ENCODE measurements at regions of chr9 and their contacts with region 1.

Region 1: GRCh38 chr9:25964239-25964638 is 286.0 kb upstream of the TUSC1 start:
- DNase-seq: peak in 1 of 2 experiments; percentile 37
- H3K4me3 ChIP-seq: no peak overlapping the region
- H3K4me3 Mint-ChIP-seq: no peak overlapping the region
- H3K27ac Mint-ChIP-seq: no peak overlapping the region
- H3K4me1 ChIP-seq: no peaks in the 10 kb centered on the region
- H3K4me1 Mint-ChIP-seq: no peaks in the 10 kb centered on the region
- H3K27me3 ChIP-seq: no peaks in the 10 kb centered on the region
- H3K27me3 Mint-ChIP-seq: no peaks in the 10 kb centered on the region
- CTCF ChIP-seq: peak in 1 of 2 experiments; percentile 11

Region 2: DNA sequence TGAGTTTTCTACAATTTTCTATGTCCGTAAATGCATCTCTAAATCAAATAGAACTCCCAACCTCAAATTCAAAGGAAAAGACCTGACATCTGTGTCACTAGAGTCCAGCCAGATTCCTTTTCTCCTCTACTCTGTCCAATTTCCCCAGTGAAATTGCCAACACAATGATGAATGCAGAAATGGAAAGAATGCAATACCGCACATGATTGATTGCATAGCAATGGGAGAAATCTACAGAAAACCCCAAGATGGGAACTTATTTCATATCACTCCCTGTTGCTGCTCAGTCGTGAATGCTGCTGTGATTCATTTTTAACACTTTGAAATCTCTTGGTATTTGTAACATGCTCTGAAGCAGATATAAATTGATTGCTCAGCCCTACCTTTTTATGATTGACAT is 69.1 kb after region 1 on chr9:
- CTCF ChIA-PET with region 1: no interaction called
- POLR2A ChIA-PET with region 1: no interaction called
- intact Hi-C with region 1: no loop called
- DNase-seq: no peak
- H3K4me3 ChIP-seq: no peak overlapping the region
- H3K4me3 Mint-ChIP-seq: no peak overlapping the region
- H3K27ac Mint-ChIP-seq: no peak overlapping the region
- H3K4me1 ChIP-seq: no peaks in the 10 kb centered on the region
- H3K4me1 Mint-ChIP-seq: no peaks in the 10 kb centered on the region
- H3K27me3 ChIP-seq: no peaks in the 10 kb centered on the region
- H3K27me3 Mint-ChIP-seq: no peaks in the 10 kb centered on the region
- CTCF ChIP-seq: no peak

Region 3: GRCh38 chr9:26326473-26327044 is 362.3 kb after region 1 on chr9:
- CTCF ChIA-PET with region 1: no interaction called
- POLR2A ChIA-PET with region 1: no interaction called
- intact Hi-C with region 1: loop called (anchors 1 kb)
- DNase-seq: peak in 1 of 2 experiments; percentile 15
- H3K4me3 ChIP-seq: no peak overlapping the region
- H3K4me3 Mint-ChIP-seq: no peak overlapping the region
- H3K27ac Mint-ChIP-seq: no peak overlapping the region
- H3K4me1 ChIP-seq: no peaks in the 10 kb centered on the region
- H3K4me1 Mint-ChIP-seq: no peaks in the 10 kb centered on the region
- H3K27me3 ChIP-seq: no peaks in the 10 kb centered on the region
- H3K27me3 Mint-ChIP-seq: no peaks in the 10 kb centered on the region
- CTCF ChIP-seq: peak; percentile 26 to 32

Region 4: DNA sequence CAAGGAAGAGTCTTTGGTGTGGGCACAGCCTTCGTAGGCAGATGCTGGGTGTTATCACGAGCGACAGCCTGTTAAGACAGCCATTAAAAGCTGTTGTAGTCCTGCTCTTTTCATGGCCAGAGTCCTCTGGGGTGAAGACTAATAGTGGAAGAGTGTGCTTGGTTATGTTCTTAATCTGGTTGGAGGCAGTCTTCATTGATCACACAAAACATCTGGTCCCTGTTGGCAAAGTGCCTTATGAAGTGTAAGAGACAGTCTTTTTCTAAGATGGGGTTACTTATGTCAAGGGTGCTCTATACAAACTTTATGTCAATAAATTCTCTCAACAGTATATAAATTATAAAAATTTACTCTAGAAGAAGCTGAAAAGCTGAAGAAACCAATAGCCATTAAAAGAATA is 648.0 kb after region 1 on chr9:
- CTCF ChIA-PET with region 1: no interaction called
- POLR2A ChIA-PET with region 1: no interaction called
- intact Hi-C with region 1: loop called (anchors 2 kb)
- DNase-seq: no peak
- H3K4me3 ChIP-seq: no peak overlapping the region
- H3K4me3 Mint-ChIP-seq: no peak overlapping the region
- H3K27ac Mint-ChIP-seq: no peak overlapping the region
- H3K4me1 ChIP-seq: no peaks in the 10 kb centered on the region
- H3K4me1 Mint-ChIP-seq: no peaks in the 10 kb centered on the region
- H3K27me3 ChIP-seq: no peaks in the 10 kb centered on the region
- H3K27me3 Mint-ChIP-seq: no peaks in the 10 kb centered on the region
- CTCF ChIP-seq: no peak

Region 5: GRCh38 chr9:26656003-26656870 is 692.0 kb after region 1 on chr9:
- CTCF ChIA-PET with region 1: no interaction called
- POLR2A ChIA-PET with region 1: no interaction called
- intact Hi-C with region 1: loop called (anchors 2 kb)
- DNase-seq: no peak
- H3K4me3 ChIP-seq: no peak overlapping the region
- H3K4me3 Mint-ChIP-seq: no peak overlapping the region
- H3K27ac Mint-ChIP-seq: no peak overlapping the region
- H3K4me1 ChIP-seq: no peaks in the 10 kb centered on the region
- H3K4me1 Mint-ChIP-seq: no peaks in the 10 kb centered on the region
- H3K27me3 ChIP-seq: no peaks in the 10 kb centered on the region
- H3K27me3 Mint-ChIP-seq: peaks cover 4% of the 10 kb centered on the region
- CTCF ChIP-seq: peak in 1 of 2 experiments; percentile 5

Measured in Caco-2 (cell line).